OCI-LY7 (cell line): ENCODE measurements at regions of chr2 and their contacts with region 1.

Region 1: GRCh38 chr2:74178201-74179062 is at the start of gene MOB1A:
- DNase-seq: peak; percentile 100
- H3K4me3 ChIP-seq: peak within 1 kb of the TSS; percentile 84
- H3K27ac ChIP-seq: peak within 1 kb of the TSS; percentile 90
- H3K4me1 ChIP-seq: peaks cover 59% of the 10 kb centered on the region
- CTCF ChIP-seq: no peak
- total RNA-seq, gene MOB1A: 79.1 and 110 TPM in 2 replicates

Region 2: GRCh38 chr2:74191596-74192380 is 13.4 kb after region 1 on chr2:
- CTCF ChIA-PET with region 1: interaction called, 3 read pairs
- POLR2A ChIA-PET with region 1: interaction called, 118 read pairs
- intact Hi-C with region 1: no loop called
- DNase-seq: no peak
- H3K4me3 ChIP-seq: no peak overlapping the region
- H3K27ac ChIP-seq: no peak overlapping the region
- H3K4me1 ChIP-seq: peaks cover 34% of the 10 kb centered on the region
- CTCF ChIP-seq: no peak

Region 3: DNA sequence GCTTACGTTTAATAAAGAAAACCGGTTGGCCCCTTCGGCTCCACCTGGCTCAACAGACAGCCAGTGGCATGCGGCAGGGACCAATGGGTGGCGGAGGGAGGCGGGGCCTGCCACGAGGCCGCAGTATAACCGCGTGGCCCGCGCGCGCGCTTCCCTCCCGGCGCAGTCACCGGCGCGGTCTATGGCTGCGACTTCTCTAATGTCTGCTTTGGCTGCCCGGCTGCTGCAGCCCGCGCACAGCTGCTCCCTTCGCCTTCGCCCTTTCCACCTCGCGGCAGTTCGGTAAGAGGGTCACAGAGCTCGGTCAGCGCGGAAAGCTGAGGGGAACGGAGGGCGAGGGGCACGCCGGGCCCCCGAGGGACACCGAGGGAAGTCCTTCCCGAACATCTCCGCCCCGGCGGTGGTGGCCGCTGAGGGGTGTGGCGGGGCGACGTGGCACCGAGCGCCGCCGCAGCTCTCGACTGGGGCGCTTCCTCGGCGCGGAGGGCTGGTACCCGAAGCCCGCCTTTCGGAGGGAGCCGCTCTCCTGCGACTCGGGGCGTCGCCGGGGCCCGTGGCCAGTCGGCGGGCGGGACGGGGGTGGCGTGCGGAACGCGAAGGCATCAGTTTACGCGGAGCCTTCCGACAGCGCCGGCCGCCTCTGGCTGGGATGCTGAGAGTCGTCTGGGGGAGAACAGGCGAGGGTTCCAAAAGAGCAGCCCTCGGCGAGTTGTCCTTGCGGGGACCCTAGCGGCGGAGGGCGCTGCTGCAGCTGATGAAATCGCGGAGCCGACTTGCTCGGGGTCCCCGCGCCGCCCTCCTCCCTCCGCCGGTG is 20.2 kb after region 1 on chr2 and contains the start of gene MTHFD2:
- CTCF ChIA-PET with region 1: interaction called, 8 read pairs
- POLR2A ChIA-PET with region 1: interaction called, 118 read pairs
- intact Hi-C with region 1: loop called (anchors 1 kb)
- DNase-seq: peak; percentile 99
- H3K4me3 ChIP-seq: peak within 1 kb of the TSS; percentile 84
- H3K27ac ChIP-seq: peak within 1 kb of the TSS; percentile 88
- H3K4me1 ChIP-seq: peaks cover 49% of the 10 kb centered on the region
- CTCF ChIP-seq: peak; percentile 81
- total RNA-seq, gene MTHFD2: 220 and 250 TPM in 2 replicates